ENCODE measurements at regions of chr4 and their contacts with region 1.

Region 1: DNA sequence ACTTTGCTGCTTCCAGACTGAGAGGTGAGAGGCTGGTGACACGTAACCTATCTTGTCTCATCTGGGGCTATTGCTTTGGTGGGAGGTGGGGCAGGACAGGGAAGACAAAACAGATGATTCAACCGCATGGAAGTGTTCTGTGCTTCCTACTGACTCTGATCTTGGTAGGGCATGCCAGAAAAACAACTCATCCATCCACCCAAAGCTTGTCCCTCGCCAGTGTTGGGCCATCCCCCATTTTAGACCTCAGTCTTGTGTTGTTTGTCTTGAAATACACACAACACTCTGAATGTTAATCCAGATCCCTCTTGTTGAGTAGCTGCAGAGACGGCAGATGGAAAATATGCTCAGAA is 351 bp downstream of the CHRNA9 start:
- DNase-seq: no peak
- H3K4me3 ChIP-seq: no peak overlapping the region
- H3K27ac ChIP-seq: no peak overlapping the region
- H3K4me1 ChIP-seq: peaks cover 9% of the 10 kb centered on the region
- H3K27me3 ChIP-seq: no peaks in the 10 kb centered on the region
- CTCF ChIP-seq: no peak

Region 2: GRCh38 chr4:40395908-40396793 is 60.7 kb after region 1 on chr4:
- CTCF ChIA-PET with region 1: no interaction called
- dilution Hi-C with region 1: loop called (anchors 5 kb)
- in situ Hi-C with region 1: no loop called
- intact Hi-C with region 1: no loop called
- DNase-seq: peak; percentile 35
- H3K4me3 ChIP-seq: no peak overlapping the region
- H3K27ac ChIP-seq: no peak overlapping the region
- H3K4me1 ChIP-seq: no peaks in the 10 kb centered on the region
- H3K27me3 ChIP-seq: no peaks in the 10 kb centered on the region
- CTCF ChIP-seq: no peak